ENCODE measurements at regions of chr6 and their contacts with region 1.

Region 1: GRCh38 chr6:3742426-3743344 is 8.8 kb downstream of the PXDC1 start:
- DNase-seq: peak; percentile 75
- H3K4me3 Mint-ChIP-seq: no peak overlapping the region
- H3K27ac Mint-ChIP-seq: no peak overlapping the region
- H3K4me1 Mint-ChIP-seq: peaks cover 13% of the 10 kb centered on the region
- H3K27me3 Mint-ChIP-seq: peaks cover 12% of the 10 kb centered on the region

Region 2: GRCh38 chr6:3848925-3849605 is 106.4 kb after region 1 on chr6 and contains the start of gene FAM50B:
- intact Hi-C with region 1: loop called (anchors 1 kb)
- DNase-seq: peak; percentile 87
- H3K4me3 Mint-ChIP-seq: peak within 1 kb of the TSS; percentile 55
- H3K27ac Mint-ChIP-seq: peak within 1 kb of the TSS; percentile 59
- H3K4me1 Mint-ChIP-seq: peaks cover 24% of the 10 kb centered on the region
- H3K27me3 Mint-ChIP-seq: no peaks in the 10 kb centered on the region
- total RNA-seq, gene FAM50B: 9.0 and 9.1 TPM in 2 replicates

Region 3: GRCh38 chr6:3929281-3929798 is 186.7 kb after region 1 on chr6:
- intact Hi-C with region 1: loop called (anchors 1 kb)
- DNase-seq: no peak
- H3K4me3 Mint-ChIP-seq: no peak overlapping the region
- H3K27ac Mint-ChIP-seq: no peak overlapping the region
- H3K4me1 Mint-ChIP-seq: no peaks in the 10 kb centered on the region
- H3K27me3 Mint-ChIP-seq: peaks cover 14% of the 10 kb centered on the region

Region 4: DNA sequence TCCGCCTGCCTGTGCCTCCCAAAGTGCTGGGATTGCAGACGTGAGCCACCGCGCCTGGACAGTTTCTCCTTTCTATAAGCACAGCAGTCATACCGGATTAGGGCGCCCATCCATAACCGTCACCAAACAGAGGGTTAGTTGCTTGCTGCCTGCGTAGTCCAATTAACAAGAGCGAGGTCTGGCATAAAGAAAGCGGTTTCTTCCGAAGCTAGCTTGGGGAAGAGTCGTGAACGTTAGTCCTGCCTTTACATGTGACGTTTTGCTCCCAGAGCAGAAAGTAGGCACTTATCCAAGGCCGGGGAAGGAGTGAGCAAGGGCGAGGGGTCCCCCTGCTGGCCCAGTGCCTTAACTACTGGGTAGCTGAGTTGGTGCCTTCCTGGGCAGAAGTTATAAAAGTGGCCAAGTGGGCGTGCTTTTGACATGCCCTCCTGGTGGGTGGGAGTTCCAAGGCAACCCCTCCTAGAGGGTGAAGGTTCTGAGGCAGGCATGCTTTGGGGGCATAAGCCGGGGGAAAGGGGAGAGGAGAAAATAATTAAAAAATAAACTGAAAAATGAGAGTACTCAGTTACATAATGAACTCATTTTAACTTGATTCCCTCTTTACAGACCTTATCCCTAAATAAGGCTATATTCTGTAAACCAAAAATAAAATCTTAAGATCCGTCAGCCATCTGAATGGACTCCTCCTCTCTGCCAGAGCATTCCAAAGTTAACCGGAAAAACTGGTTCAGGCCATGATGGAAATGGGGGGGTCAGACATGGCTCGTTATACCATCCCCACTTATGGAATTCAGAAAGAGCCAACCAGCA is 248.2 kb after region 1 on chr6:
- intact Hi-C with region 1: loop called (anchors 1 kb)
- DNase-seq: peak; percentile 53
- H3K4me3 Mint-ChIP-seq: no peak overlapping the region
- H3K27ac Mint-ChIP-seq: no peak overlapping the region
- H3K4me1 Mint-ChIP-seq: peaks cover 16% of the 10 kb centered on the region
- H3K27me3 Mint-ChIP-seq: no peaks in the 10 kb centered on the region

Region 5: DNA sequence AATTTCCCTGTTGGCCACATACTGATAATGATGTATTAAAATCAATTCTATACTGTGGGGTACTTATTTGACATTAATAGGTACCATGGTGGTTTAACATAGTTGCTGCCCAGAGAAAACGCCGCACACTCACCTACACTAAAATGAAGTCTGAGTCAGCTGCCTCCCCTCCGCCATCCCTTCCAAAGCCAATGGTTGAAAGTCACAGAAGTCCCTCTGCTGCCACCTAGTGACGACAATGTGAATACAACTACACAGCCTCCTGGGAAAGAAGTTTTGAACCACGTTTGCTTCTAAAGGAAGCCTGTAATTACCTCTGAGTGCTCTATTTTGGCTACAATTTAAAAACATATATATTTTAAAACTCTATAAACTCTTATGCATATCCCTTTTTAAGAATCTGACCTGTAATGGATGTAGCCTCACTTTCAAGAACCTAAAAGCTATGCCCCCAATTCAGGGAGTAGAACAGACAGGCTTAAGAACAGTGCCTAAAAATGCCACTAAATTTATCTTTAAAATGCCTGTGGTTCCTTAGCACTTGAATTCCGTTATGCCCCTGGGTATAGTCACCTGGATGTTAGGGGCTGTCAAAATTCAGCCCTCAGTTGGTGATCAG is 413.3 kb after region 1 on chr6:
- intact Hi-C with region 1: loop called (anchors 1 kb)
- DNase-seq: peak; percentile 70
- H3K4me3 Mint-ChIP-seq: no peak overlapping the region
- H3K27ac Mint-ChIP-seq: no peak overlapping the region
- H3K4me1 Mint-ChIP-seq: peaks cover 6% of the 10 kb centered on the region
- H3K27me3 Mint-ChIP-seq: peaks cover 3% of the 10 kb centered on the region

Region 6: GRCh38 chr6:4936681-4937041 is 1194.0 kb after region 1 on chr6:
- intact Hi-C with region 1: loop called (anchors 5 kb)
- DNase-seq: no peak
- H3K4me3 Mint-ChIP-seq: no peak overlapping the region
- H3K27ac Mint-ChIP-seq: no peak overlapping the region
- H3K4me1 Mint-ChIP-seq: peaks cover 45% of the 10 kb centered on the region
- H3K27me3 Mint-ChIP-seq: no peaks in the 10 kb centered on the region